ENCODE measurements at regions of chr1 and their contacts with region 1.

Region 1: GRCh38 chr1:28581536-28582247 is 10.4 kb upstream of the RAB42 start:
- DNase-seq: peak; percentile 96
- ATAC-seq: peak; percentile 90
- H3K4me3 Mint-ChIP-seq: peak overlapping the region; percentile 95
- H3K27ac Mint-ChIP-seq: peak overlapping the region; percentile 83
- H3K4me1 Mint-ChIP-seq: peaks cover 26% of the 10 kb centered on the region
- H3K27me3 Mint-ChIP-seq: no peaks in the 10 kb centered on the region

Region 2: GRCh38 chr1:28248283-28249012 is 333.2 kb before region 1 on chr1:
- POLR2A ChIA-PET with region 1: interaction called, 39 read pairs
- DNase-seq: peak; percentile 82
- ATAC-seq: peak; percentile 23
- H3K4me3 Mint-ChIP-seq: peak overlapping the region; percentile 84
- H3K27ac Mint-ChIP-seq: peak overlapping the region; percentile 93
- H3K4me1 Mint-ChIP-seq: peaks cover 45% of the 10 kb centered on the region
- H3K27me3 Mint-ChIP-seq: no peaks in the 10 kb centered on the region

Region 3: GRCh38 chr1:28505406-28506187 is 76.1 kb before region 1 on chr1 and contains the start of gene RCC1:
- POLR2A ChIA-PET with region 1: interaction called, 104 read pairs
- DNase-seq: peak; percentile 89
- ATAC-seq: peak; percentile 85
- H3K4me3 Mint-ChIP-seq: peak within 1 kb of the TSS; percentile 99
- H3K27ac Mint-ChIP-seq: peak within 1 kb of the TSS; percentile 99
- H3K4me1 Mint-ChIP-seq: peaks cover 27% of the 10 kb centered on the region
- H3K27me3 Mint-ChIP-seq: no peaks in the 10 kb centered on the region
- total RNA-seq, gene RCC1: 46.2 to 51.7 TPM

Region 4: GRCh38 chr1:28560886-28561285 is 20.8 kb before region 1 on chr1:
- POLR2A ChIA-PET with region 1: interaction called, 10 read pairs
- DNase-seq: no peak
- ATAC-seq: no peak
- H3K4me3 Mint-ChIP-seq: no peak overlapping the region
- H3K27ac Mint-ChIP-seq: no peak overlapping the region
- H3K4me1 Mint-ChIP-seq: peaks cover 1% of the 10 kb centered on the region
- H3K27me3 Mint-ChIP-seq: no peaks in the 10 kb centered on the region

Region 5: DNA sequence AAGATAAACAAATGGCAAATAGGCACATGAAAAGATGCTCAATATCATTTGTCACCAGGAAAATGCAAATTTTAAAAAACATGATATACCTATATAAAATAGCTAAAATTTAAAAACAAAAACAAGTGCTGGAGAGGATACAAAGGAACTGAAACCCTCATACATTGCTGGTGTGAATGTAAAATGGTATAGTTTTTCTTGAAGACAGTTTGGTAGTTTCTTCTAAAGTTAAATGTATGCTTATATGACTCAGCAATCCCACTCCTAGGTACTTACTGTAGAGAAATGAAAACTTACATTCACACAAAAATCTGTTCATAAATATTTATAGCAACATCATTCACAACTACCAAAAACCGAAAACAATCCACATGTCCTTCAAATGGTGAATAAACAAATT is 50.0 kb after region 1 on chr1:
- POLR2A ChIA-PET with region 1: no interaction called
- DNase-seq: no peak
- ATAC-seq: no peak
- H3K4me3 Mint-ChIP-seq: no peak overlapping the region
- H3K27ac Mint-ChIP-seq: no peak overlapping the region
- H3K4me1 Mint-ChIP-seq: peaks cover 4% of the 10 kb centered on the region
- H3K27me3 Mint-ChIP-seq: no peaks in the 10 kb centered on the region

Region 6: GRCh38 chr1:28648474-28649198 is 66.9 kb after region 1 on chr1 and contains the start of gene RNU11:
- POLR2A ChIA-PET with region 1: interaction called, 52 read pairs
- DNase-seq: peak; percentile 75
- ATAC-seq: peak; percentile 82
- H3K4me3 Mint-ChIP-seq: peak within 1 kb of the TSS; percentile 87
- H3K27ac Mint-ChIP-seq: peak within 1 kb of the TSS; percentile 98
- H3K4me1 Mint-ChIP-seq: peaks cover 21% of the 10 kb centered on the region
- H3K27me3 Mint-ChIP-seq: no peaks in the 10 kb centered on the region
- total RNA-seq, gene RNU11: not detected

Region 7: GRCh38 chr1:29181413-29182225 is 599.9 kb after region 1 on chr1 and contains the start of gene SRSF4:
- POLR2A ChIA-PET with region 1: interaction called, 14 read pairs
- DNase-seq: peak; percentile 100
- ATAC-seq: peak; percentile 90
- H3K4me3 Mint-ChIP-seq: peak within 1 kb of the TSS; percentile 95
- H3K27ac Mint-ChIP-seq: peak within 1 kb of the TSS; percentile 96
- H3K4me1 Mint-ChIP-seq: peaks cover 46% of the 10 kb centered on the region
- H3K27me3 Mint-ChIP-seq: no peaks in the 10 kb centered on the region
- total RNA-seq, gene SRSF4: 119 to 129 TPM